ENCODE measurements at regions of chr12 and their contacts with region 1.

Region 1: DNA sequence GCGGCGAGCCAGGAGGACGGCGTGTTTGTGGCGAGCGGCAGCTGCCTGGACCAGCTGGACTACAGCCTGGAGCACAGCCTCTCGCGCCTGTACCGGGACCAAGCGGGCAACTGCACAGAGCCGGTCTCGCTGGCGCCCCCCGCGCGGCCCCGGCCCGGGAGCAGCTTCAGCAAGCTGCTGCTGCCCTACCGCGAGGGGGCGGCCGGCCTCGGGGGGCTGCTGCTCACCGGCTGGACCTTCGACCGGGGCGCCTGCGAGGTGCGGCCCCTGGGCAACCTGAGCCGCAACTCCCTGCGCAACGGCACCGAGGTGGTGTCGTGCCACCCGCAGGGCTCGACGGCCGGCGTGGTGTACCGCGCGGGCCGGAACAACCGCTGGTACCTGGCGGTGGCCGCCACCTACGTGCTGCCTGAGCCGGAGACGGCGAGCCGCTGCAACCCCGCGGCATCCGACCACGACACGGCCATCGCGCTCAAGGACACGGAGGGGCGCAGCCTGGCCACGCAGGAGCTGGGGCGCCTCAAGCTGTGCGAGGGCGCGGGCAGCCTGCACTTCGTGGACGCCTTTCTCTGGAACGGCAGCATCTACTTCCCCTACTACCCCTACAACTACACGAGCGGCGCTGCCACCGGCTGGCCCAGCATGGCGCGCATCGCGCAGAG is 873 bp downstream of the PLXNC1 start:
- DNase-seq: peak; percentile 40
- H3K4me3 Mint-ChIP-seq: peak overlapping the region; percentile 87
- H3K27ac Mint-ChIP-seq: peak overlapping the region; percentile 47
- H3K4me1 Mint-ChIP-seq: peaks cover 30% of the 10 kb centered on the region
- H3K27me3 Mint-ChIP-seq: peaks cover 47% of the 10 kb centered on the region

Region 2: GRCh38 chr12:94025756-94026155 is 123.5 kb before region 1 on chr12:
- intact Hi-C with region 1: no loop called
- DNase-seq: no peak
- H3K4me3 Mint-ChIP-seq: no peak overlapping the region
- H3K27ac Mint-ChIP-seq: no peak overlapping the region
- H3K4me1 Mint-ChIP-seq: peaks cover 3% of the 10 kb centered on the region
- H3K27me3 Mint-ChIP-seq: no peaks in the 10 kb centered on the region

Region 3: GRCh38 chr12:94172973-94173372 is 23.7 kb after region 1 on chr12:
- intact Hi-C with region 1: loop called (anchors 2 kb)
- DNase-seq: no peak
- H3K4me3 Mint-ChIP-seq: no peak overlapping the region
- H3K27ac Mint-ChIP-seq: no peak overlapping the region
- H3K4me1 Mint-ChIP-seq: peaks cover 58% of the 10 kb centered on the region
- H3K27me3 Mint-ChIP-seq: no peaks in the 10 kb centered on the region

Region 4: GRCh38 chr12:94248582-94248981 is 99.3 kb after region 1 on chr12:
- intact Hi-C with region 1: no loop called
- DNase-seq: no peak
- H3K4me3 Mint-ChIP-seq: no peak overlapping the region
- H3K27ac Mint-ChIP-seq: no peak overlapping the region
- H3K4me1 Mint-ChIP-seq: peaks cover 29% of the 10 kb centered on the region
- H3K27me3 Mint-ChIP-seq: no peaks in the 10 kb centered on the region

Region 5: GRCh38 chr12:94262228-94263010 is 113.2 kb after region 1 on chr12:
- intact Hi-C with region 1: loop called (anchors 1 kb)
- DNase-seq: peak; percentile 52
- H3K4me3 Mint-ChIP-seq: peak overlapping the region; percentile 80
- H3K27ac Mint-ChIP-seq: peak overlapping the region; percentile 91
- H3K4me1 Mint-ChIP-seq: peaks cover 31% of the 10 kb centered on the region
- H3K27me3 Mint-ChIP-seq: no peaks in the 10 kb centered on the region

Region 6: DNA sequence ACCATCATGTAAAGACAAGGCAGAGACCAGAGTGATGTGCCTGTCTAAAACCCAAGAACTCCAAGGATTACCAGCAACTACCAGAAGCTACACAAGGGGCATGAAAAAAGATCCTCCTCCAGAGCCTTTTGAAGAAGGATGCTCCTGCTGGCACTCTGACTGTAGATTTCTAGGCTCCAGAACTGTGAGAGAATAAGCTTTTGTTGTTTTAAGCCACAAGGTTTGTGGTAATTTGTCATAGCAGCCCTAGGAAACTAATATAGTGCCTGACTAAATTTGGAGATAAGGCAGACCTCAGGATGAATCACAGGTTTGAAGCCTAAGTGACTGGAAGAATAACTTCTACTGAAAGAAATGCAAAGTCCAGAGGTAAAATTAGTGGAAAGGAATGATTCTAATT is 177.5 kb after region 1 on chr12:
- intact Hi-C with region 1: loop called (anchors 5 kb)
- DNase-seq: no peak
- H3K4me3 Mint-ChIP-seq: no peak overlapping the region
- H3K27ac Mint-ChIP-seq: peak overlapping the region; percentile 44
- H3K4me1 Mint-ChIP-seq: peaks cover 35% of the 10 kb centered on the region
- H3K27me3 Mint-ChIP-seq: no peaks in the 10 kb centered on the region

Region 7: GRCh38 chr12:94372461-94372860 is 223.2 kb after region 1 on chr12:
- intact Hi-C with region 1: loop called (anchors 2 kb)
- DNase-seq: no peak
- H3K4me3 Mint-ChIP-seq: peak overlapping the region; percentile 13
- H3K27ac Mint-ChIP-seq: peak overlapping the region; percentile 74
- H3K4me1 Mint-ChIP-seq: peaks cover 41% of the 10 kb centered on the region
- H3K27me3 Mint-ChIP-seq: no peaks in the 10 kb centered on the region

Region 8: GRCh38 chr12:94459728-94460615 is 310.7 kb after region 1 on chr12 and contains the start of gene CEP83:
- intact Hi-C with region 1: loop called (anchors 1 kb)
- DNase-seq: peak; percentile 95
- H3K4me3 Mint-ChIP-seq: peak within 1 kb of the TSS; percentile 88
- H3K27ac Mint-ChIP-seq: peak within 1 kb of the TSS; percentile 92
- H3K4me1 Mint-ChIP-seq: peaks cover 27% of the 10 kb centered on the region
- H3K27me3 Mint-ChIP-seq: peaks cover 5% of the 10 kb centered on the region
- total RNA-seq, gene CEP83: 32.4 and 35.9 TPM in 2 replicates

Region 9: DNA sequence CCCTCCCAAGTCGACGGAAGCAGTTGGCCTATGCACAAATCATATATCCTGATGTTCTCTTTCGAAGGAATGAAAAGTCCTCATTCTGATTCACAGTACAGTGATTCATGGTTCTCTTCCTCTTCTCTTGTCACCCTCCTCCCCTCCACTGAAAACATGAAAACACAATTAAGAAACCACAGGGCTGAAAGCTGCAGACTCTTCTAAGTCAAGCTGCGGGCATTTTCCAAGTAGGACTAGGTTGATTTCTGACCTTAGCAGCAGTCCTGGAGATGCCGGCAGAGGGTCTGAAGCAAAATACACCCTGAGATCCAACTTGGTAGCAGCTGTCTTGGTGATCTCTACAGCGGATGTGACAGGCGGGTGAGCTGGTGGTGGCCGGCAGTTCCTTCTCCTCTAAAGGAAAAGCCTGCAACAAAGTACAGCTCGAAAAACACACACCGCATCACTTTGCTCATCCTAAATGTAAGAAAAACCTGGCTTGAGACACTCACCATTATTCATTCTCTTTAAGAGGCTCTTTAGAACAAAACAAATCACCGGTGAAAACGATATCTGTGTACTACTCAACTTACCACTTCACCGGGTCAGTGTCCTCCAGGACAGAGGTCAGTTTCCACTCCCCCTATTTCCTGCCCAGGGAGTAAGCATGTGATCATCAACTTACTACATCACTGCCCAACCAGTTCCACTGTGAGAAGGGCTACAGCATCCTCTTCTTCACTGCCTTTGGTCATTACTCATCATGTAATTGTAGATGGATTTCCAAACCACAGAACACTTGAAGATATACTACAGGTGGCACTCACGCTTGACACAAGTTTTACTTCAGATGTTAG is 495.1 kb after region 1 on chr12:
- intact Hi-C with region 1: loop called (anchors 5 kb)
- DNase-seq: no peak
- H3K4me3 Mint-ChIP-seq: no peak overlapping the region
- H3K27ac Mint-ChIP-seq: no peak overlapping the region
- H3K4me1 Mint-ChIP-seq: peaks cover 44% of the 10 kb centered on the region
- H3K27me3 Mint-ChIP-seq: peaks cover 74% of the 10 kb centered on the region

Measured in activated T-helper 2 cell treated with anti-CD3 and anti-CD28 coated beads, Interferon-gamma antibody, Interleukin-2, Interleukin-4, amounts not matched to agents 10 μg/mL and 5 μg/mL and 100 μg/mL, durations not matched to agents 14 hours and 24 hours and 36 hours (primary cell).